OCI-LY7 (cell line): ENCODE measurements at regions of chr17 and their contacts with region 1.

Region 1: DNA sequence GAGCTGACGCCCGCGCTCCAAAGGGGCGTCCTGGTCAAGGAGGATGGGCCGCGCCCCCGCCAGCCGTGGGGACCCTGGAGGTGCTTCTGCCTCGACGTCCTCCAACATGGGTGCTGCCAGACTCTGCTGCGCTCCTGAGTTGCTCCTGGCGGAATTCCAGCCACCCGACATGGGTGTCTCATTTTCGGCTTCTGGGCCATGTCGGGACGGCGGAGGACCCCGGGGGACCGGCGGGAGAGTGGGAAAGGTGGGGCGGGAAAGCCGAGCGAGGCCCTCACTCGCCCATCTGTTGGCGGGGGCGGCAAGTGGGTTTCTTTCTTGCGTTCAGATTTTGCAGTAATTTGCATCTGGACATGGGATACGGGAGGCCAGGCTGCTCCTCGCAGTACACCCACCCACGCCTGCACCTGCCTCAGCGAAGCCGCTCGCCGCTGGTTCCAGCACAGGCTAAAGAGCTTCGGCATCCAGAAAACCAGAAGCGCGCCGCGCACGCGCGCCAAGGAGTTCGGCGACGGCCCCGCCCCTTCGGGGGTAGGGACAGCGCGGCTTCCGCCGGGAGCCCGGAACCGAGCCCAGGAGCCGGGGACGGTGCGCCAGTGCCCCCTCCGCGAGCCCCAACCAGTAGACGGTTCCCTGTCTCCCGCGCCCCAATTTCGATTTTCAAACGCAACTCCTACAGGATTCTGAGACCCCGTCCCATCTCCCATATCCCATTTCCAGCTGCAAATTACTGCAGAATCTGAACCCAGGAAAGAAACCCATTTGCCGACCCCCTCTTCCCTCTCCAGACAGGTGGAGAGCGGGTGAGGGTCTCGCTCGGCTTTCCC is at the start of gene ARMC7:
- DNase-seq: peak; percentile 96
- H3K4me3 ChIP-seq: peak within 1 kb of the TSS; percentile 72
- H3K27ac ChIP-seq: no peak within 1 kb of the TSS
- H3K4me1 ChIP-seq: peaks cover 29% of the 10 kb centered on the region
- CTCF ChIP-seq: no peak
- total RNA-seq, gene ARMC7: 6.8 and 7.1 TPM in 2 replicates

Region 2: DNA sequence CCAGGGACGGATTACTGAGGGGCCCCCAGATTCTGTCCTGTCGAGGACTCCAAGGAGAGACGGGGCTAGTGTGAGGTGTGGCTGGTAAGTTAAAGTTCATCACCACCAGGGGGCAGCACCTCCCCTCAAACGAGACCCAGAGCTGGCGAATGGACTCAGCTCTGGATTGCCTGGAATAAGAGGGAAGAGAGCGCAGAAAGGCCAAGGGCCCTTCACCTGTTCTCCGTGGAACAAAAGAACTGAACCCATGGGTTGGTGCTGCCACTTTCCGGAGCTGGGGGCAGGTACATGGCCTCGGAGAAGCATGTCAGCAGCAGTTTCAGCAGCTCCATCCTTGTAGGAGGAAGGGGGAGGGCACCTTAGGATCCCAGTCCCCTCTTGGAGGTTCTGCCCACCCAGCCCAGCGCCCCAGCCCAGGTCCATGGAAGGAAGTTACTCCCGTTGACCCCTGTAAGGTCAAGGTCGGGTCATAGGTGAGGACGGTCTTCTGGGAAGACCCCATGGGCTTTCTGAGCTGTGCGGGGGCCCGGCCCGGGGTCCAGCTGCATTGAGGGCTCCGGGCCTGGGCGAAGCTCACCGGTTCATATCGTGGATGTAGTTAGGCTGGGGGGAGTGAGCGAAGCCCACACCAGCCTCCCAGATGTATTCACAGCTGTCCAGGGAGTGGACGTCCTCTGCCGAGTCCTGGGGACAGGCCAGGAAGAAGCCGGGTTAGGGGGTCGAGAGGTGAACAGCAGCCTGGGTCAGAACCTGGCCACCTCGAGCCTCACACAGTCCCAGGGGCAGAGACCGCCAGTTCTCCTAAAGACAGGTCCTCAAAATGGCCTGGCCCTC is 147.7 kb before region 1 on chr17:
- CTCF ChIA-PET with region 1: interaction called, 4 read pairs
- POLR2A ChIA-PET with region 1: interaction called, 7 read pairs
- intact Hi-C with region 1: loop called (anchors 2 kb)
- DNase-seq: peak; percentile 90
- H3K4me3 ChIP-seq: no peak overlapping the region
- H3K27ac ChIP-seq: no peak overlapping the region
- H3K4me1 ChIP-seq: peaks cover 7% of the 10 kb centered on the region
- CTCF ChIP-seq: peak; percentile 95

Region 3: GRCh38 chr17:75131280-75132017 is 21.8 kb after region 1 on chr17 and contains the start of gene NT5C:
- CTCF ChIA-PET with region 1: interaction called, 26 read pairs
- POLR2A ChIA-PET with region 1: interaction called, 11 read pairs
- intact Hi-C with region 1: loop called (anchors 1 kb)
- DNase-seq: peak; percentile 95
- H3K4me3 ChIP-seq: peak within 1 kb of the TSS; percentile 89
- H3K27ac ChIP-seq: peak within 1 kb of the TSS; percentile 69
- H3K4me1 ChIP-seq: peaks cover 28% of the 10 kb centered on the region
- CTCF ChIP-seq: peak; percentile 90
- total RNA-seq, gene NT5C: 229 and 259 TPM in 2 replicates

Region 4: GRCh38 chr17:75173526-75173925 is 63.9 kb after region 1 on chr17:
- CTCF ChIA-PET with region 1: interaction called, 6 read pairs
- POLR2A ChIA-PET with region 1: interaction called, 9 read pairs
- intact Hi-C with region 1: loop called (anchors 1 kb)
- DNase-seq: no peak
- H3K4me3 ChIP-seq: no peak overlapping the region
- H3K27ac ChIP-seq: no peak overlapping the region
- H3K4me1 ChIP-seq: peaks cover 3% of the 10 kb centered on the region
- CTCF ChIP-seq: no peak

Region 5: GRCh38 chr17:75205037-75205792 is 95.6 kb after region 1 on chr17 and contains the start of gene NUP85:
- CTCF ChIA-PET with region 1: interaction called, 5 read pairs
- POLR2A ChIA-PET with region 1: interaction called, 16 read pairs
- intact Hi-C with region 1: loop called (anchors 1 kb)
- DNase-seq: peak; percentile 96
- H3K4me3 ChIP-seq: peak within 1 kb of the TSS; percentile 86
- H3K27ac ChIP-seq: peak within 1 kb of the TSS; percentile 72
- H3K4me1 ChIP-seq: peaks cover 19% of the 10 kb centered on the region
- CTCF ChIP-seq: no peak
- total RNA-seq, gene NUP85: 129 and 130 TPM in 2 replicates

Region 6: GRCh38 chr17:75412455-75413317 is 303.1 kb after region 1 on chr17:
- CTCF ChIA-PET with region 1: no interaction called
- POLR2A ChIA-PET with region 1: no interaction called
- intact Hi-C with region 1: loop called (anchors 1 kb)
- DNase-seq: peak; percentile 95
- H3K4me3 ChIP-seq: peak overlapping the region; percentile 50
- H3K27ac ChIP-seq: peak overlapping the region; percentile 60
- H3K4me1 ChIP-seq: peaks cover 54% of the 10 kb centered on the region
- CTCF ChIP-seq: peak; percentile 97